IMR-90 (cell line): ENCODE measurements at regions of chr6 and their contacts with region 1.

Region 1: DNA sequence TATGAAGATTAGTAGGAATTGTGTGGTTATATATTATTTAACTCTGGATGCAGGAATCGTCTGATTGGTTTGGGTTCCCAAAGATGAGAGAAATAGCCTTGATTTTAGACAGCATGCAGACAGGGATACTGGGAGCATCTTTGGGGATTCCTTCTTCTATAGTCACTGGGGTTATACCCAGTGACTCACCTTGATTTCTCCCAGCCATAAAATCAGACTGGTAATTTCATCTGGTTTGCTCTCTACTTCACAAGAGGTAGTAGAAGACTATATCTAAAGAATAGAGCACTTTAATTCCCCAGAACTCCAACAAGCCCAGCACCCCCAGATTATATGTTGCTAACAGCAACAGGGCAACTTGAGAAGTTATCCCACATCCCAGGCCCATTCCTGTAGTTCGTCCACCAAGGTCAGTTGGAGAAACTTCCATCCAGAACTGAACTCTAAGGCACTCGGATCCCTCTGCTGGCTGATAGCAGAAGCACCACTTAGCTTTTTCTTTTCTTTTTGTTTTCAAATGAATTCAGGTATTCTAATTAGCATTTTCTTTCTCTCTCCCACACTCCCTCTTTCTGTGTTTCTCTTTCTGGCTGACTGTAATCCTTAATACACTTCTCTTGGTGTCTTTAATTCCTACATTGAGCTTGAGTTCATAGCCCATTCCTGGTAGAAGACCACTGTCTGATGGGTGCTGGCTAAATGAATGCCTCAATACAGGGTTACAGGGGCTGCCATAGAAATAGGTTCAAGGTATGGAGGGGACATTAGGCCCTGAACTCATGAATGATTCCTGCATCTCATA is 20.4 kb upstream of the EFHC1 start:
- DNase-seq: peak; percentile 70
- ATAC-seq: peak; percentile 96
- H3K4me3 ChIP-seq: no peak overlapping the region
- H3K27ac ChIP-seq: no peak overlapping the region
- H3K4me1 ChIP-seq: peaks cover 2% of the 10 kb centered on the region; the same call in 1 of the 2 replicates
- H3K27me3 ChIP-seq: no peaks in the 10 kb centered on the region
- CTCF ChIP-seq: peak; percentile 91
- POLR2A ChIP-seq: no peak
- RAD21 ChIP-seq: peak; percentile 86

Region 2: DNA sequence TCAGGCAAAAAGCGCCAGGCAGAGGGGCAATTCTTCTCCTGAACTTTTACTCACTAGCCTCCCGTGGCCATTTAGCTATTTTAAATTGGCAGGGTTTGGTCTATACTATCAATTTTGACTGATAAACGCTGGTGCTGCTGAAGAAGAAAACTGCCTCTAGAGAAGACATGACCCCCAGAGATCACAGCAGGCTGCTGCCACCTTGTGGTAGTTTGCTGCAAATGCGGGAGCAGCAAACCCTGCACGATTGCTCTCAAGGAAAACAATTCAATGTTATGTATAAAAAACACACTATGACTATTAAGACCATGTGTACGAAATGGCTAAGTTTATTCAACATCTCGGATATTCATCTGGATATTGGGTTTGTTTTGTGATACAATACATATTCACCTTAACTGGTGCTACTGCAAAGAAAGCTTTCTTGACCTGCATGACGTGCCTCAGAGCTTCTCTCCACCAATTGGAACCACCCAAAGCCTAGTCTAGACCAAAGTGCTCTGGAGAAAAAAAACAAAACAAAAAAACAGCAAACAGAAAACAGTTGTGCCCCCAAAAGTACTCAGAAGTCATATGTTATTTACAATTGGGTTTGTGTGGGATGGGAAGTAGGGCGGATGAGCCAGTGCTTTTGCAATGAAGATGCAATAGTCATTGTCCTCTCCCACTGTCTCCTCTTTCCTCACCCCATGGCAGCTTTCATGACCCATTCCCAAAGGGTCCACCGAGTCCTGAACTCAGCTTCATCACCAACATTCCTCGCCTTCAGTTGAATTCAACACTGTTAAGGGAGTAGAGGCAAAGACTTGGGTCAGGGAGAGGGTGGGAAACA is 135.8 kb before region 1 on chr6:
- CTCF ChIA-PET with region 1: interaction called, 7 read pairs
- POLR2A ChIA-PET with region 1: no interaction called
- dilution Hi-C with region 1: no loop called
- in situ Hi-C with region 1: no loop called
- intact Hi-C with region 1: loop called (anchors 1 kb)
- DNase-seq: peak; percentile 74
- ATAC-seq: peak; percentile 74
- H3K4me3 ChIP-seq: no peak overlapping the region
- H3K27ac ChIP-seq: no peak overlapping the region
- H3K4me1 ChIP-seq: peaks cover 12% of the 10 kb centered on the region; the same call in 1 of the 2 replicates
- H3K27me3 ChIP-seq: no peaks in the 10 kb centered on the region
- CTCF ChIP-seq: peak; percentile 96
- POLR2A ChIP-seq: no peak
- RAD21 ChIP-seq: peak; percentile 87

Region 3: GRCh38 chr6:52293067-52293466 is 106.6 kb before region 1 on chr6:
- CTCF ChIA-PET with region 1: interaction called, 4 read pairs
- POLR2A ChIA-PET with region 1: no interaction called
- dilution Hi-C with region 1: no loop called
- in situ Hi-C with region 1: loop called (anchors 5 kb)
- intact Hi-C with region 1: no loop called
- DNase-seq: no peak
- ATAC-seq: no peak
- H3K4me3 ChIP-seq: no peak overlapping the region
- H3K27ac ChIP-seq: no peak overlapping the region
- H3K4me1 ChIP-seq: no peaks in the 10 kb centered on the region
- H3K27me3 ChIP-seq: peaks cover 8% of the 10 kb centered on the region
- CTCF ChIP-seq: no peak
- POLR2A ChIP-seq: no peak
- RAD21 ChIP-seq: no peak

Region 4: DNA sequence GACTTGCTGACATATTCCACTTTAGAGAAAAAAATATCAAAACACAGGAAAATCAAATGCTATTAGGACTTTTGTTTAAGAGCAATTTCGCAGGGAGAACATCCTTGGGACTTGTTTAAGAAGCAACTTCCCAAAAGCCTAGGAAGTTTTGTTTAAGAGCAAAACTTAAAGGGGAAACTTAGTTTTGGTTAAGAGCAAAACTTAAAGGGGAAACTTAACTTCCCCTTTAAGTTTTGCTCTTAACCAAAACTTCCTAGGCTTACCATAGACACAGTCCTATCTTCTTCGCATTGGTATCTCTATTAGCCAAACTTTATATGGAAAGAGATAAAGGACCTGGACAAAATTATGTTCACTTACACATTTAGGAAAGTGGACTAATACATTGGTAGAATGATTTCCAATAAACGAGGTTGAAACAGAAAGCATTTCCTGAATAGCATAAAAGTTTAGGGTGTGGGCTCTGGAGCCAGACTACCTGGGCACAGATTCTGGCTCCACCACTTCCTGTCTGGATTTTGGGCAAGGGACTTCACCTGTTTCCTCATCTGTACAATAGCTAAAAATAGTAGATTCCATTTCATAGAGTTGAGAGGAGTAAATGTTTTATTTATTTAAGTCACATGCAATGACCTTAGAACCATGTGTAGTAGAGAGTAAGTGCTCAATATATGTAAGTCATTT is 22.0 kb before region 1 on chr6:
- CTCF ChIA-PET with region 1: no interaction called
- POLR2A ChIA-PET with region 1: interaction called, 12 read pairs
- dilution Hi-C with region 1: no loop called
- in situ Hi-C with region 1: no loop called
- intact Hi-C with region 1: no loop called
- DNase-seq: no peak
- ATAC-seq: no peak
- H3K4me3 ChIP-seq: no peak overlapping the region
- H3K27ac ChIP-seq: no peak overlapping the region
- H3K4me1 ChIP-seq: no peaks in the 10 kb centered on the region
- H3K27me3 ChIP-seq: no peaks in the 10 kb centered on the region
- CTCF ChIP-seq: no peak
- POLR2A ChIP-seq: no peak
- RAD21 ChIP-seq: no peak

Region 5: GRCh38 chr6:53484476-53485280 is 1085.0 kb after region 1 on chr6:
- CTCF ChIA-PET with region 1: no interaction called
- POLR2A ChIA-PET with region 1: no interaction called
- dilution Hi-C with region 1: no loop called
- in situ Hi-C with region 1: no loop called
- intact Hi-C with region 1: loop called (anchors 10 kb)
- DNase-seq: peak; percentile 75
- ATAC-seq: peak; percentile 88
- H3K4me3 ChIP-seq: no peak overlapping the region
- H3K27ac ChIP-seq: no peak overlapping the region
- H3K4me1 ChIP-seq: no peaks in the 10 kb centered on the region
- H3K27me3 ChIP-seq: peaks cover 17% of the 10 kb centered on the region
- CTCF ChIP-seq: peak; percentile 99
- POLR2A ChIP-seq: no peak
- RAD21 ChIP-seq: peak; percentile 97